ENCODE measurements at regions of chr7 and their contacts with region 1.

Region 1: DNA sequence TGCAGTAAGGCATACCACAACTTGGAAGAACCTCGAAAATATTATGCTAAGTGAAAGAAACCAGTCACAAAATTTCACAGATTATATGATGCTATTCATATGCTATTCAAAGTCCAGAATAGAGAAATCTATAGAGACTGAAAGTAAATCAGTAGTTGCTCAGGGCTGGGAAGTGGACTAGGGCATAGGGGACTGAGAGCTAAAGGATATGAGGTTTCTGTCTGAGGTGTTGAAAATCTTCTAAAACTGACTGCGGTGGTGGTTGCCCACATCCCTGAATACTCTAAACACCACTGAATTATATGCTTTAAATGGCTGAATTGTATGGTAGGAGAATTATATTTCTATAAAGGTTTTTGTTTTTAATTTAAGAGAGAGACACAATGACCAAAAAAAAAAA is 161.3 kb downstream of the ELAPOR2 start:
- DNase-seq: no peak
- H3K4me3 ChIP-seq: no peak overlapping the region
- H3K27ac ChIP-seq: no peak overlapping the region
- H3K4me1 ChIP-seq: no peaks in the 10 kb centered on the region
- H3K27me3 ChIP-seq: no peaks in the 10 kb centered on the region
- CTCF ChIP-seq: no peak
- POLR2A ChIP-seq: no peak

Region 2: GRCh38 chr7:85890244-85890811 is 1007.8 kb before region 1 on chr7:
- intact Hi-C with region 1: loop called (anchors 10 kb)
- DNase-seq: no peak
- H3K4me3 ChIP-seq: no peak overlapping the region
- H3K27ac ChIP-seq: no peak overlapping the region
- H3K4me1 ChIP-seq: no peaks in the 10 kb centered on the region
- H3K27me3 ChIP-seq: no peaks in the 10 kb centered on the region
- CTCF ChIP-seq: peak in 3 of 4 experiments; percentile 16 to 45 (median 28)
- POLR2A ChIP-seq: no peak

Region 3: GRCh38 chr7:87140271-87140748 is 242.1 kb after region 1 on chr7:
- intact Hi-C with region 1: no loop called
- DNase-seq: no peak
- H3K4me3 ChIP-seq: no peak overlapping the region
- H3K27ac ChIP-seq: no peak overlapping the region
- H3K4me1 ChIP-seq: no peaks in the 10 kb centered on the region
- H3K27me3 ChIP-seq: no peaks in the 10 kb centered on the region
- CTCF ChIP-seq: no peak
- POLR2A ChIP-seq: no peak